ENCODE measurements at regions of chr1 and their contacts with region 1.

Region 1: GRCh38 chr1:61851849-61852669 is 109.8 kb downstream of the PATJ start:
- DNase-seq: peak in 7 of 9 donors; percentile 19 to 61 (median 56)
- ATAC-seq: peak; percentile 68
- H3K4me3 ChIP-seq: no peak overlapping the region
- H3K4me3 Mint-ChIP-seq: no peak overlapping the region
- H3K27ac ChIP-seq: no peak overlapping the region
- H3K27ac Mint-ChIP-seq: peak overlapping the region in 2 of 9 donors; percentile 3 to 32
- H3K4me1 ChIP-seq: no peaks in the 10 kb centered on the region
- H3K4me1 Mint-ChIP-seq: peaks cover 0 to 3% (median 0%) of the 10 kb centered on the region in 7 donors
- H3K27me3 ChIP-seq: no peaks in the 10 kb centered on the region
- H3K27me3 Mint-ChIP-seq: no peaks in the 10 kb centered on the region

Region 2: GRCh38 chr1:60841116-60842046 is 1010.7 kb before region 1 on chr1:
- CTCF ChIA-PET with region 1: no interaction called
- POLR2A ChIA-PET with region 1: no interaction called
- intact Hi-C with region 1: loop called (anchors 5 kb)
- DNase-seq: no peak
- ATAC-seq: no peak
- H3K4me3 ChIP-seq: no peak overlapping the region
- H3K4me3 Mint-ChIP-seq: no peak overlapping the region
- H3K27ac ChIP-seq: no peak overlapping the region
- H3K27ac Mint-ChIP-seq: no peak overlapping the region
- H3K4me1 ChIP-seq: no peaks in the 10 kb centered on the region
- H3K4me1 Mint-ChIP-seq: no peaks in the 10 kb centered on the region
- H3K27me3 ChIP-seq: no peaks in the 10 kb centered on the region
- H3K27me3 Mint-ChIP-seq: peaks cover 0 to 41% (median 24%) of the 10 kb centered on the region in 5 donors

Region 3: DNA sequence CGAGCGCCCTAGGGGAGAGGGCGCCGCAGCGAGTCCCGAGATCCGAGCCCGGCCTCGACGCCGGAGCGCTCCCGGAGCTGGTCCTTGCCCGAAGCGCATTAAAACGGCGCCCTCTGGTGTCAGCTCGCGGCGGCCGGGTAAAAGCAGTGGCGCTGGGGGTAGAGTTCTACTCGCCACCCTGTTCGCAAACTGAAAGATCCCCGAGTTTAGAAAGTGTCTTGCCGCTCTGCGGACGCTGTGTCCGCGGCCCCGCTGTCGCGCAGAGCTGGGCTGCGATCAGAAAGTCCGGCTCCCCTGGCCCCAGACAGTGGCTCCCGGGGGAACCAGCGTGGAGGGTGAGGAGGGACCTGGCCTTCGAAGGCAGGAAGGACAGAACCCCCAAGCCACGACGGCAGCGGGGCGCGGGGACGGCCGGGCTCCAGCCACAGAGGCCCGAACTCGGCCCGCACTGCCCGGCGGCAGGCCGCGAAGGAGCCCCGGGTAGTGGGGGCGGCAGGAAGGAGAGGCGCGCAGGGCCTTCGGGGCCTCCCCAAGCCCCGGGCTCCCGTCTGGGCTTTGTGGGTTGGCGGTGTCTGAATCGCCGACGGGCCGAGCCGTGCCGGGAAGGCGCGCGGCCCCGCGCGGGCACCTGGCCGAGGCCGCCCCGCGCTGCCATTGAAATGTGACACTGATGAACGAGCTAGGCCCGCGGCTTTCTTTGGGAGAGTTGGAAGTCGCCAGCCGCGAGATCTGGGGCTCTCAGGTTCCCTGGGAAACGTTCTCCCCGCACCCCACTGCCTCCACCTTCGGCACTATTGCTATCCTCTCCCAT is 808.8 kb before region 1 on chr1:
- CTCF ChIA-PET with region 1: interaction called, 4 read pairs
- POLR2A ChIA-PET with region 1: no interaction called
- intact Hi-C with region 1: loop called in 1 of 2 experiments (anchors 2 kb)
- DNase-seq: peak; percentile 62 to 83 (median 78)
- ATAC-seq: peak; percentile 96
- H3K4me3 ChIP-seq: peak overlapping the region; percentile 35
- H3K4me3 Mint-ChIP-seq: peak overlapping the region; percentile 53 to 88 (median 73)
- H3K27ac ChIP-seq: no peak overlapping the region
- H3K27ac Mint-ChIP-seq: no peak overlapping the region
- H3K4me1 ChIP-seq: peaks cover 3 to 4% of the 10 kb centered on the region in 2 donors
- H3K4me1 Mint-ChIP-seq: peaks cover 0 to 4% (median 0%) of the 10 kb centered on the region in 7 donors
- H3K27me3 ChIP-seq: peaks cover 0 to 8% of the 10 kb centered on the region in 2 donors
- H3K27me3 Mint-ChIP-seq: peaks cover 28 to 67% (median 38%) of the 10 kb centered on the region in 5 donors

Region 4: GRCh38 chr1:61453111-61453961 is 398.7 kb before region 1 on chr1:
- CTCF ChIA-PET with region 1: no interaction called
- POLR2A ChIA-PET with region 1: no interaction called
- intact Hi-C with region 1: loop called (anchors 1 to 5 kb)
- DNase-seq: peak; percentile 29 to 69 (median 59)
- ATAC-seq: peak; percentile 88
- H3K4me3 ChIP-seq: no peak overlapping the region
- H3K4me3 Mint-ChIP-seq: peak overlapping the region in 3 of 10 donors; percentile 14 to 39 (median 26)
- H3K27ac ChIP-seq: no peak overlapping the region
- H3K27ac Mint-ChIP-seq: peak overlapping the region in 6 of 9 donors; percentile 11 to 82 (median 44)
- H3K4me1 ChIP-seq: peaks cover 0 to 5% of the 10 kb centered on the region in 2 donors
- H3K4me1 Mint-ChIP-seq: peaks cover 0 to 13% (median 8%) of the 10 kb centered on the region in 7 donors
- H3K27me3 ChIP-seq: no peaks in the 10 kb centered on the region
- H3K27me3 Mint-ChIP-seq: peaks cover 0 to 2% (median 0%) of the 10 kb centered on the region in 5 donors

Region 5: GRCh38 chr1:61641578-61642336 is 210.3 kb before region 1 on chr1:
- CTCF ChIA-PET with region 1: no interaction called
- POLR2A ChIA-PET with region 1: no interaction called
- intact Hi-C with region 1: loop called (anchors 1 kb)
- DNase-seq: peak; percentile 41 to 72 (median 53)
- ATAC-seq: peak; percentile 93
- H3K4me3 ChIP-seq: peak overlapping the region; percentile 36
- H3K4me3 Mint-ChIP-seq: peak overlapping the region; percentile 47 to 92 (median 84)
- H3K27ac ChIP-seq: no peak overlapping the region
- H3K27ac Mint-ChIP-seq: peak overlapping the region in 6 of 9 donors; percentile 69 to 91 (median 82)
- H3K4me1 ChIP-seq: peaks cover 0 to 7% of the 10 kb centered on the region in 2 donors
- H3K4me1 Mint-ChIP-seq: peaks cover 5 to 20% (median 15%) of the 10 kb centered on the region in 7 donors
- H3K27me3 ChIP-seq: no peaks in the 10 kb centered on the region
- H3K27me3 Mint-ChIP-seq: peaks cover 0 to 7% (median 0%) of the 10 kb centered on the region in 5 donors

Region 6: GRCh38 chr1:61782771-61783170 is 69.3 kb before region 1 on chr1:
- CTCF ChIA-PET with region 1: no interaction called
- POLR2A ChIA-PET with region 1: interaction called, 3 read pairs
- intact Hi-C with region 1: loop called in 1 of 2 experiments (anchors 5 kb)
- DNase-seq: peak in 8 of 9 donors; percentile 49 to 93 (median 90)
- ATAC-seq: peak; percentile 98
- H3K4me3 ChIP-seq: no peak overlapping the region
- H3K4me3 Mint-ChIP-seq: peak overlapping the region; percentile 66 to 94 (median 76)
- H3K27ac ChIP-seq: peak overlapping the region; percentile 39
- H3K27ac Mint-ChIP-seq: peak overlapping the region; percentile 75 to 95 (median 88)
- H3K4me1 ChIP-seq: peaks cover 26 to 32% of the 10 kb centered on the region in 2 donors
- H3K4me1 Mint-ChIP-seq: peaks cover 18 to 77% (median 67%) of the 10 kb centered on the region in 7 donors
- H3K27me3 ChIP-seq: no peaks in the 10 kb centered on the region
- H3K27me3 Mint-ChIP-seq: no peaks in the 10 kb centered on the region

Region 7: GRCh38 chr1:61808968-61809367 is 43.1 kb before region 1 on chr1:
- CTCF ChIA-PET with region 1: no interaction called
- POLR2A ChIA-PET with region 1: no interaction called
- intact Hi-C with region 1: no loop called
- DNase-seq: no peak
- ATAC-seq: no peak
- H3K4me3 ChIP-seq: no peak overlapping the region
- H3K4me3 Mint-ChIP-seq: no peak overlapping the region
- H3K27ac ChIP-seq: no peak overlapping the region
- H3K27ac Mint-ChIP-seq: no peak overlapping the region
- H3K4me1 ChIP-seq: no peaks in the 10 kb centered on the region
- H3K4me1 Mint-ChIP-seq: peaks cover 0 to 2% (median 0%) of the 10 kb centered on the region in 7 donors
- H3K27me3 ChIP-seq: no peaks in the 10 kb centered on the region
- H3K27me3 Mint-ChIP-seq: no peaks in the 10 kb centered on the region